ENCODE measurements at regions of chr2 and their contacts with region 1.

Region 1: GRCh38 chr2:230007931-230008707 is 60.6 kb downstream of the SLC16A14 start:
- DNase-seq: peak; percentile 65 to 73 (median 69)
- H3K4me3 ChIP-seq: no peak overlapping the region
- H3K4me3 Mint-ChIP-seq: peak overlapping the region in 5 of 8 donors; percentile 22 to 57 (median 51)
- H3K27ac ChIP-seq: no peak overlapping the region
- H3K27ac Mint-ChIP-seq: peak overlapping the region in 1 of 7 donors; percentile 9
- H3K4me1 ChIP-seq: no peaks in the 10 kb centered on the region
- H3K4me1 Mint-ChIP-seq: peaks cover 0 to 4% (median 1%) of the 10 kb centered on the region in 4 donors
- H3K27me3 ChIP-seq: no peaks in the 10 kb centered on the region
- H3K27me3 Mint-ChIP-seq: no peaks in the 10 kb centered on the region

Region 2: DNA sequence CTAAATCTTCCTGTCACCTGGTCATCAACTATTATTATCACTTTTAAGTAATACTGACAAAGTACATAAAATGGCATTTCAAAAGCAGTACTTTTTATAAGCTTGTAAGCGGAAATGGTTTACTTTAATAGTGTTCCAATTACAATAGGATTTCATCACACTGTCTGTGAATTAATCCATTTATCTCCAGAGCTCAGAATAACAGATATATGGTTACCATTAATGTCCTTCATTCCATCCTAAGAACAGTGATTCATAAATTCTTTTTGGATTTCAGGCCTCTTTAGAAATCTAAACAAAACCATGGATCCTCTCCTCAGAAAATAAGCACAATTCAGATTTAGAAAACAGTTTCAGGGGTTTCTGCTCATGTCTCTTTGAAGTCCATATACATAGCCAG is 805.5 kb before region 1 on chr2:
- CTCF ChIA-PET with region 1: no interaction called
- POLR2A ChIA-PET with region 1: no interaction called
- intact Hi-C with region 1: no loop called
- DNase-seq: no peak
- H3K4me3 ChIP-seq: no peak overlapping the region
- H3K4me3 Mint-ChIP-seq: no peak overlapping the region
- H3K27ac ChIP-seq: no peak overlapping the region
- H3K27ac Mint-ChIP-seq: no peak overlapping the region
- H3K4me1 ChIP-seq: no peaks in the 10 kb centered on the region
- H3K4me1 Mint-ChIP-seq: no peaks in the 10 kb centered on the region
- H3K27me3 ChIP-seq: no peaks in the 10 kb centered on the region
- H3K27me3 Mint-ChIP-seq: no peaks in the 10 kb centered on the region

Region 3: DNA sequence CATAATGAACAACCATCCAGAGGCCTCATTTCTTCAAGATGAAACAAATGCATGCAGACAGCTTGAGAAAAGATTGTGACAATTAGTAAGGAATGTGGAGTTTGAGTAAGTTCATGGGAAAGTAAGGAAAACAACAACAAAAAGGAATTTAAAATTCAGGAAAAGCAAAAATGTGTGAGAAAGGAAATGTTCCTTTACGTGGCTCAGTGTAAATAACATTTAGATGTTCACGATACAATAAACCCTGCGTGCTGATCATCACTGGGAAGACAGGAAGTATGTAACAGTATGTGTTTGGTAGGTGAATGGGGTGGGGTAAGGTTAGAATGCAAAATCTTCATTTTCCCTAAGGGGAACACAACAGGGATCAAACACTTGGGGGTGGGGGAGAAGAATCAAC is 159.0 kb before region 1 on chr2:
- CTCF ChIA-PET with region 1: no interaction called
- POLR2A ChIA-PET with region 1: no interaction called
- intact Hi-C with region 1: no loop called
- DNase-seq: peak in 2 of 5 donors; percentile 12 to 13
- H3K4me3 ChIP-seq: no peak overlapping the region
- H3K4me3 Mint-ChIP-seq: peak overlapping the region in 7 of 8 donors; percentile 53 to 83 (median 66)
- H3K27ac ChIP-seq: no peak overlapping the region
- H3K27ac Mint-ChIP-seq: peak overlapping the region; percentile 60 to 92 (median 82)
- H3K4me1 ChIP-seq: peaks cover 63% of the 10 kb centered on the region
- H3K4me1 Mint-ChIP-seq: peaks cover 47 to 72% (median 65%) of the 10 kb centered on the region in 4 donors
- H3K27me3 ChIP-seq: no peaks in the 10 kb centered on the region
- H3K27me3 Mint-ChIP-seq: no peaks in the 10 kb centered on the region

Region 4: DNA sequence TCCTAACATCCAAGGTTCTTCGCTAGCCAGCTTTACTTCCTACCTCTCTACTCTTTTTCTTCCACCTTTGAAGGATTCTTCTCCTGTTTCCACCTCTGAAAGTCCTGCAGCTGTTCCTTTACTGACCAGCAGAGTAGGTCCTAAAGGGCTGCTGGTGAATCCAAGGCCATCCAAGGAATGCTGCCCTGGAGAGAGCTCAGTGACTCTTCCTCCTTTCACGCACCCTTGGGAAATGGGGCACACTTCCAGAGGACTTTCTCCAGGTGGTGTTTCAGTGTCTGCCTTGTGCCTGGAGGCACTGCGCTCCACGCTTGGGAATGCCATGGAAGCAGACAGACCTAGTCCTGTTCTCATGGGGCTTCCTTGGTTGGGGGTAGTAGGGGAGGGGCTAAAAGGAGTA is 15.2 kb after region 1 on chr2:
- CTCF ChIA-PET with region 1: interaction called, 11 read pairs
- POLR2A ChIA-PET with region 1: no interaction called
- intact Hi-C with region 1: no loop called
- DNase-seq: no peak
- H3K4me3 ChIP-seq: no peak overlapping the region
- H3K4me3 Mint-ChIP-seq: no peak overlapping the region
- H3K27ac ChIP-seq: no peak overlapping the region
- H3K27ac Mint-ChIP-seq: no peak overlapping the region
- H3K4me1 ChIP-seq: no peaks in the 10 kb centered on the region
- H3K4me1 Mint-ChIP-seq: no peaks in the 10 kb centered on the region
- H3K27me3 ChIP-seq: no peaks in the 10 kb centered on the region
- H3K27me3 Mint-ChIP-seq: no peaks in the 10 kb centered on the region

Region 5: GRCh38 chr2:230106810-230107209 is 98.7 kb after region 1 on chr2:
- CTCF ChIA-PET with region 1: no interaction called
- POLR2A ChIA-PET with region 1: no interaction called
- intact Hi-C with region 1: no loop called
- DNase-seq: no peak
- H3K4me3 ChIP-seq: no peak overlapping the region
- H3K4me3 Mint-ChIP-seq: no peak overlapping the region
- H3K27ac ChIP-seq: no peak overlapping the region
- H3K27ac Mint-ChIP-seq: no peak overlapping the region
- H3K4me1 ChIP-seq: no peaks in the 10 kb centered on the region
- H3K4me1 Mint-ChIP-seq: no peaks in the 10 kb centered on the region
- H3K27me3 ChIP-seq: no peaks in the 10 kb centered on the region
- H3K27me3 Mint-ChIP-seq: peaks cover 13 to 19% of the 10 kb centered on the region in 2 donors